Astrocyte of the cerebellum (primary cell): ENCODE measurements at regions of chr13 and their contacts with region 1.

Region 1: GRCh38 chr13:33730147-33730546 is 87.8 kb upstream of the RFC3 start:
- DNase-seq: no peak
- H3K4me3 ChIP-seq: no peak overlapping the region
- CTCF ChIP-seq: no peak

Region 2: GRCh38 chr13:33542283-33543088 is 187.7 kb before region 1 on chr13:
- in situ Hi-C with region 1: loop called (anchors 10 kb)
- DNase-seq: peak; percentile 99
- H3K4me3 ChIP-seq: peak overlapping the region; percentile 37
- CTCF ChIP-seq: peak; percentile 78

Region 3: GRCh38 chr13:33642374-33643068 is 87.6 kb before region 1 on chr13:
- in situ Hi-C with region 1: no loop called
- DNase-seq: no peak
- H3K4me3 ChIP-seq: no peak overlapping the region
- CTCF ChIP-seq: no peak

Region 4: GRCh38 chr13:33678906-33679657 is 51.1 kb before region 1 on chr13:
- in situ Hi-C with region 1: no loop called
- DNase-seq: peak; percentile 39
- H3K4me3 ChIP-seq: no peak overlapping the region
- CTCF ChIP-seq: no peak

Region 5: DNA sequence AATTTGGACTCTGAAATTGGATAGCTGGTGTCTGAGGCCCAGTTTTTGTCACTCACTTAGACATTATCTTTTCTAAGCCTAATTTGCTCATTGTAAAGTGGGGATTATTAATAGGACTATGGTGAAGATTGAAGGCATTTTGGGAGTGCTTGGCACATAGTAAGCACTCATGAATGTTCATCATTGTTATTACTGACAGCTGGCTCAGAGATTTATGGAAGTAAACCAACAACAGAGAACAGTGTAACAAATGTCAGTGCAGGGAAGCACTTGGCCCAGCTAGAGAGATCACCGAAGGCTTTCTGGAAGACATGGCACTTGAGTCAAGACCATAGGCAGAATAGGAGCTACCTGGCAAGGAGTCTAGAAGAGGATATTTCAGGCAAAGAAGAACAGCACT is 180.1 kb after region 1 on chr13:
- in situ Hi-C with region 1: no loop called
- DNase-seq: no peak
- H3K4me3 ChIP-seq: no peak overlapping the region
- CTCF ChIP-seq: no peak